Endothelial cell of umbilical vein (primary cell): ENCODE measurements at regions of chr9 and their contacts with region 1.

Region 1: DNA sequence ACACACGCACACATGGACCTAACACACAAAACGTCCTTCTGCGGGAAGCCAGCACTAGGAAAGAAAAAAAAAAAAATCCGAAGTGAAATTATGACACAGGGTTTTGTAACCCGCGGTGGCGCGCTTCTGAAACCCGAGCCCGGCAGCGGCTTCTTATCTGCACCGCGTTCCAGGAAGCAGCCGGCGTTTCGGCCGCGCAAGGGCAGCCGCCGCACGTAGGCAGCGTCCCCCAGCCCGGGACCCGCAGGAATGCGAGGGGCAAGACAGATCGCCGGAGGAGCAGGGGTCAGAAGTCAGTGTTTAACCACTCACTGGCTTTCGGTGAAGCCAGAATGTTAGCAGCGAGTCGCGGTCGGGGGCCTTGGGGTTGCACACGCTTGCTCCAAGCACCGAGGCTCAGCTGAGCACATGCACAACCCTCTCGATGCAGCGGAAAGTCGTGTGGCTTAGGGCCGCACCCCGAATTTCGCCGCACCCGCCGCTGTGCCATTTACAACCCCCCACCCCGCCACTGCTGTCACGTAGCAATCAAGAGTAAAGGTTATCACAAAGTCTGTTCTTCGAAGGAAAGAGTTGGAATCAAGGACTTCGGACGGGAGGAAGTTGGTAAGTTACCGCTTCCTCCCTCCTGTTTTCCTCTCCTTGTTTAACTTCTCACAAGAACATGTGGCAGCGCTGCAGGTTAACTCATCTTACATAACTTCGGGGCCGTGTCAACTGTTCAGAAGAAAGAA is 167.9 kb downstream of the AUH start:
- DNase-seq: peak; percentile 94
- H3K4me3 ChIP-seq: peak overlapping the region in 2 of 3 experiments; percentile 28 to 51
- H3K27ac ChIP-seq: peak overlapping the region; percentile 100
- H3K4me1 ChIP-seq: peaks cover 21% of the 10 kb centered on the region
- H3K27me3 ChIP-seq: no peaks in the 10 kb centered on the region
- CTCF ChIP-seq: no peak
- POLR2A ChIP-seq: peak; percentile 40

Region 2: GRCh38 chr9:90991953-90992352 is 201.9 kb before region 1 on chr9:
- CTCF ChIA-PET with region 1: no interaction called
- POLR2A ChIA-PET with region 1: no interaction called
- dilution Hi-C with region 1: no loop called
- intact Hi-C with region 1: loop called (anchors 5 kb)
- DNase-seq: no peak
- H3K4me3 ChIP-seq: no peak overlapping the region
- H3K27ac ChIP-seq: peak overlapping the region; percentile 46
- H3K4me1 ChIP-seq: peaks cover 10% of the 10 kb centered on the region
- H3K27me3 ChIP-seq: no peaks in the 10 kb centered on the region
- CTCF ChIP-seq: no peak
- POLR2A ChIP-seq: no peak

Region 3: DNA sequence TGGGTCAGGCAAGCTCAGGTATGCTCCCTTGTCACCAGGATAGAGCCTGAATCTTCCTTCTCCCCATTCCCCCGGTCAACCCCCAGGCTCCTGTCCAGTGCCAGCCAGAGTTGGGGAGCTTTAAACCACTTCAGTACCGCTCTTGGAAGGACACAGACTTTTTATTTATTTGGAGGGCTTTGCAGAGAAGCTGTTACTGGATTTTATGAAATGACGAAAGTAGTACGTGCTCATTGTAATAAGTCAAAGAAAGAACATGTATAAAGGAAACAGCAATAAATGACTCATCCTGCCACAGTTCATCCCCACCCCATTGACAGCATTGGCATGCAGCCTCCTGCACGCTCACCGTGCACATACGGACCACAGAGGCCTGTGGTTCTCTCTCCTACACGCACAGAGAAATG is 62.4 kb before region 1 on chr9:
- CTCF ChIA-PET with region 1: no interaction called
- POLR2A ChIA-PET with region 1: no interaction called
- dilution Hi-C with region 1: no loop called
- intact Hi-C with region 1: loop called (anchors 1 kb)
- DNase-seq: peak; percentile 72
- H3K4me3 ChIP-seq: no peak overlapping the region
- H3K27ac ChIP-seq: peak overlapping the region; percentile 16
- H3K4me1 ChIP-seq: peaks cover 9% of the 10 kb centered on the region
- H3K27me3 ChIP-seq: no peaks in the 10 kb centered on the region
- CTCF ChIP-seq: no peak
- POLR2A ChIP-seq: no peak

Region 4: DNA sequence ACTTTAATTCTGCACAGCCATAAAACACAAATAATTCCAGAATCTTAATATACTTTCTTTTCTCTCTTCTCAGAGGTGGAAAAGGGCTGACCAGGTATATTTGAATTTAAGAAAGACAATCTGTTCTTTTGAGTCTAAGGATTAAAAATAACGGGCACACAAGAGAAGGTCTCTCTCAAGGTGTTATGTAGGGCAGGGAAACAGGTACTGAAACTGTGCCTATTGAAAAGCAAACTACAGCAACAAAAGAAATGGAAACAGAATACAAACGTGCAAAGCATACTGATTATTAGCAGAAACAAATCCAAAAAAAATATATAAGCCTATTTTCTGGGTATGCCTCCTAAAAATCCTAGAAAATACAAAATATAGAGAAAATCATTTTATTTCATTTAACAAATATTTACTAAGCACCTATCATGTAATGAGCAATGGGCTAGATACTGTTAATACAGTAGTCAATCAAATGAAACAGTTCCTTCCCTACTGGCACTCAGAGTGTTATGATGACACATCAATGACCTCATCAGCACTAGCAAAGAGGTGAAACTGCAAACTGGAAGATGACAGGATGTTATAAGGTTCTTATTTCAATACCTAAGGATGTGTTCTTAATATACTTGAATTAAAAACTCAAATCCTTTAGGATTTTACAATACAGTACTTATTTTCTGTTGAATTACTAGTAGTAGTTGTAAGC is 80.2 kb after region 1 on chr9:
- CTCF ChIA-PET with region 1: no interaction called
- POLR2A ChIA-PET with region 1: no interaction called
- dilution Hi-C with region 1: no loop called
- intact Hi-C with region 1: no loop called
- DNase-seq: peak; percentile 32
- H3K4me3 ChIP-seq: no peak overlapping the region
- H3K27ac ChIP-seq: no peak overlapping the region
- H3K4me1 ChIP-seq: no peaks in the 10 kb centered on the region
- H3K27me3 ChIP-seq: no peaks in the 10 kb centered on the region
- CTCF ChIP-seq: no peak
- POLR2A ChIP-seq: no peak

Region 5: DNA sequence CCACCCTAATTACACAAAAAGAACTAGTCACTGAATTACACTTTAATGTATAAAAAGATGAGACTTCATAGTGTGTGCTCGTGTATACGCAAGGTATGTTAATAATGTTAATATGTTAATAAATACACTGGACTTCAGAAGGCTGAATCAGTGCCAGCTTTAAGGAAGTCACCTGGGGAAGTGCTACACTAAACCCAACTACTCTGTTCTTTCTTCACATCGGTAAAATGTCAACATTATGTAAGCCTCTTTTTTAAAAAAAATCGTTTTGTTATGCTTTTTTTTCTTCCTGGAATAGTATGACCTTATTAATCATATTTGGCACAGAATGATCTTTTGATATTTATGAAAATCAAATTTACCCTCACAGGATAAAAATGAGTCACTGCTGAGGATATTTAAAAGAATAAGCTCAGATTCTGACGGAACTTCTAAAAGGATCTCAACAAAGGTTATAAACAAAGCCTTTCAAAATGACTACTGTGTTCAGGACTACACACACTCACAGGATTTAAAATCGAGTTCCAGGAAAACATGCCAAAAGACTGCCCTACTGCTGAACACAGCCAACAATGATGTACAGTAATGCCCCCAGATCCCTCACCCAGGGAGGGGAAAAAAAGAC is 92.0 kb after region 1 on chr9:
- CTCF ChIA-PET with region 1: no interaction called
- POLR2A ChIA-PET with region 1: no interaction called
- dilution Hi-C with region 1: no loop called
- intact Hi-C with region 1: loop called (anchors 1 kb)
- DNase-seq: peak; percentile 77
- H3K4me3 ChIP-seq: no peak overlapping the region
- H3K27ac ChIP-seq: peak overlapping the region; percentile 63
- H3K4me1 ChIP-seq: peaks cover 12% of the 10 kb centered on the region
- H3K27me3 ChIP-seq: no peaks in the 10 kb centered on the region
- CTCF ChIP-seq: no peak
- POLR2A ChIP-seq: no peak

Region 6: DNA sequence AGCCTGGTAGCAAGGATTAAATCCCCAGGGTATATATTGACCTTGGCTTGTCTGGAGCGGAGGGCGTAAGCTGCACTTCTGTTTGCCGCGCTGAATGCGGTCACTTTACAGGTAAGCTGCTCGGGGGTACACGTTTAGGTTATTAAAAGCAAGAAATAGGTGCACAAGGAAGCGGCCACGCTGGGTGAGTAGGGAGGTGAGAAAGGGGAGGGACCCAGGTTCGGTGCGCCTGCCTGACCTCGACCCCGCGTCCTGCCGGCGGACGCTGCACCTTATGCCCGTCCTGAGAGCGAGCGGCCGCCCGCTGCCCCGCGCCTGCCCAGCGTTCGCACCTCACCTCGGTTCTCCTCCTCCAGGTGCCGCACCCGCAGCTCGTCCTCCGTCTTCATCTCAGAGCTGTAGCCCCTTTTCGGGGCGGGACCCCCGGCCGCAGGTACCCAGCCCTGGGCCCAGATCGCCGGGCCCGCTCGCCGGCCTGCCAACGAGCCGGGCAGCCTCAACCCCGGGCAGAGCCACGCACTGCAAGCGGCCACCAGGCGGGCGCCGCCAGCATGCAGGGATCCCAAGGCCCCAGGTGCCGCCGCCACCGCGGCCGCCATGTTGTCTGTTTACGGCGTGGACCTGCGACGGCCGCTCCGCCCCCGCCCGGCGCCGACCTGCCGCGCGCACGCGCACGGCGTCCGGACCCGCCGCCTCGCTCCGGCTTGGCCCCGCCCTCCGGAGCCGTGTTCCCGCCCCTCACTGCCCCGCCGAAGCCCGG is 167.6 kb after region 1 on chr9 and contains the start of gene AUH:
- CTCF ChIA-PET with region 1: interaction called, 3 read pairs
- POLR2A ChIA-PET with region 1: no interaction called
- dilution Hi-C with region 1: no loop called
- intact Hi-C with region 1: loop called (anchors 1 kb)
- DNase-seq: peak; percentile 82
- H3K4me3 ChIP-seq: peak within 1 kb of the TSS; percentile 84 to 95 (median 88)
- H3K27ac ChIP-seq: peak within 1 kb of the TSS; percentile 26
- H3K4me1 ChIP-seq: peaks cover 15% of the 10 kb centered on the region
- H3K27me3 ChIP-seq: no peaks in the 10 kb centered on the region
- CTCF ChIP-seq: no peak
- POLR2A ChIP-seq: peak; percentile 50
- total RNA-seq, gene AUH: 9.2 and 10.7 TPM in 2 replicates